AG04449 (cell line): ENCODE measurements at regions of chr9 and their contacts with region 1.

Region 1: DNA sequence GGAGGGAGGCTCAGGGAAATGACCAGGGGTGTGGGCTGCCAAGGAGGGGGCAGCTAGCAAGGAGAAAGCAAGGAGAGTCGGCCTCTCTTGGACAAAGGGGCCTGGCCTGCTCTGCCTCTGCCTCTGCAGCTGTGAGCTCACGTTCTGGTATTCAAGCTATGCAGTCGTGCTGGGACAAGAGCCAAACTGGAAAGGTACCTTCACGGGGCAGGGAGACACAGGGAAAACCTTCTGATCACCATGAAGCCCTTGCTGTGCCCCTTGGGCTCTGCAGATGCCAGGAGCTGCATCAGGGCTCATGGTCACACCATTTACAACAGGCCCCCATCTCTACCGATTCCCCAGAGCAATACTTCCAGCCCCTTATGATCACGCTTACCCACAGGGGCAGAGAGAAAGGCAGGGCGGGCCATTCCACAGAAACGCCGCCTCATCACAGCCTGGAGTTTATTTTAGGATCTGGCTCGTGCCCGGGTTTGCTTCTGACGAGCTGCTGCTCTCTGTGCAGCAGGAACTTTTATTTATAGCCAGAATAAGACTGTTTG is 63.2 kb downstream of the PRRT1B start:
- DNase-seq: peak; percentile 54
- H3K4me3 ChIP-seq: peak overlapping the region; percentile 43
- CTCF ChIP-seq: no peak

Region 2: DNA sequence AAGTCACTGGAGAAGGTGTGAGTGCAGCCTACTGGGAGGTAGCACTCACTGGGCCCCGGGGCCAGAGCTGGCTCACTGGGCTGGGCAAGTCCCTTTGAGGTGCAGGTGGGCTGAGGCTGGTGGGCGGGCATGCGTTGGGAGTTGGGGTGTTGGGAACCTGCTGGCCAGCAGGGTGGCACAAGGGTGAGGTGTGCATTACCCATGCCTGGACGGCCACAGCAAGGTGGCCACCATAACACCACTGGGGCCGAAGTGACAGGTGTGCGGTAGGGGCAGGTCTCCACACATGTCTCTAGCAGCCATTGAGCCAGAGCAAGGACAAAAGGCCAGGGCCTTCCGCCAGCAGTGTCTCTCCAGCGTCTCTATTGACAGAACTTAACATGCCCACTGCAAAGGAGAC is 40.7 kb before region 1 on chr9:
- CTCF ChIA-PET with region 1: no interaction called
- POLR2A ChIA-PET with region 1: no interaction called
- DNase-seq: no peak
- H3K4me3 ChIP-seq: no peak overlapping the region
- CTCF ChIP-seq: no peak

Region 3: GRCh38 chr9:131590908-131591844 is 17.4 kb before region 1 on chr9:
- CTCF ChIA-PET with region 1: interaction called, 43 read pairs
- POLR2A ChIA-PET with region 1: interaction called, 3 read pairs
- DNase-seq: peak; percentile 14
- H3K4me3 ChIP-seq: no peak overlapping the region
- CTCF ChIP-seq: peak; percentile 90

Region 4: DNA sequence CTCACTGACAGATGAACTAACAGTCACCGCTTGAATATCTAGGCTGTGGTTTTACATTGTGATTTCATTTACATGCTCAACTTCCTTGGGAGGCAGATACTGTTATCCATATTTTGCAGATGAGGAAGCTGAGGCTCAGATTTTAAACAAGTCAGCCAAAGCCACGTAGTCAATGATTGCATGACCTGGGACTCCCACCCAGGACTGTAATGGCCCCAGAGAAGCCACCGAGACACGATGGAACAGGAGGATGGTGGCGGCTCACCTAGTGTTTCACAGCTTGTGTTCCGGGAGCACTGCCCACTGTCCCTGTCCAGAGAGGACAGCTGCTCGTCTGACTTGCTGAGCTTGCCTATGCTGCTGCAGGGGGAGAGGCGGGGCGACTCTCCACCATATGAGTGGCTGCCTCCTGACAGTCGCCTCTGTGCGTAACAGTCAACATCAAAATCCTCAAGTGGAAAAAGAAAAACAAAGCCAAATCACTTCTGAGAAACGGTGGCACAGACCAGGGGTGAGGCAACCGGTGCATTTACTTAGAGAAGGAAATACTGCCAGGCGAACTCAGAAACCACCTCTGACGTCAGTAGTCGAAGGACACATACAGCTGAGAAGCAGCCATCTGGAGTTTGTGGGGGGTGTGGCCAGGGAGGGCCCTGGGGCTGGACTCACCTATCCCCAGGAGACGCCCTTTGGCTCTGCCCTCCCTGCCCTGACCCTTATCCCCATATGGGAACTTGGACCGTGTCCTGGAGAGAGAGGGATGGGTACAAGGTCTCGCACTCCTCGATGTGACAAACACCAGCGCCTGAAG is 19.3 kb after region 1 on chr9:
- CTCF ChIA-PET with region 1: interaction called, 4 read pairs
- POLR2A ChIA-PET with region 1: interaction called, 12 read pairs
- DNase-seq: no peak
- H3K4me3 ChIP-seq: no peak overlapping the region
- CTCF ChIP-seq: no peak